Naive thymus-derived CD4-positive, alpha-beta T cell (primary cell): ENCODE measurements at regions of chr10 and their contacts with region 1.

Region 1: GRCh38 chr10:113960617-113961181 is 83.0 kb upstream of the ADRB1 start:
- DNase-seq: peak in 5 of 9 donors; percentile 4 to 34 (median 21)
- ATAC-seq: no peak
- H3K4me3 ChIP-seq: peak overlapping the region; percentile 27
- H3K4me3 Mint-ChIP-seq: peak overlapping the region; percentile 31 to 79 (median 67)
- H3K27ac ChIP-seq: no peak overlapping the region
- H3K27ac Mint-ChIP-seq: peak overlapping the region in 8 of 9 donors; percentile 30 to 92 (median 82)
- H3K4me1 ChIP-seq: peaks cover 37 to 47% of the 10 kb centered on the region in 2 donors
- H3K4me1 Mint-ChIP-seq: peaks cover 26 to 64% (median 49%) of the 10 kb centered on the region in 7 donors
- H3K27me3 ChIP-seq: no peaks in the 10 kb centered on the region
- H3K27me3 Mint-ChIP-seq: peaks cover 0 to 27% (median 6%) of the 10 kb centered on the region in 5 donors

Region 2: DNA sequence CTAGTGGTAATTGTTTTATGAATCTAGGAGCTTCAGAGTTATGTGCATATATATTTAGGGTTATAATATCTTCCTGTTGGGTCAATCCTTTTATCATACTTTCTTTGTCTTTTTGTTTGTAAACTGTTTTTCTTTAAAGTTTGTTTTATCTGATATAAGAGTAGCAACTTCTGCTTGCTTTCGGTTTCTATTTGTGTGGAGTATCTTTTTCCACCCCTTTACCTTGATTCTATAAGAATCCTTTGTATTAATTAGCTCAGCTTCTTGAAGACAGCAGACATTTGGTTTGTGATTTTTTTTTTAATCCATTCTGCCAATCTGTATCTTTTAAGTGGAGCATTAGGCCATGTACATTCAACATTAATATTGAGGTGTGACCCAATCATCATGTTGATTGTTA is 271.6 kb before region 1 on chr10:
- CTCF ChIA-PET with region 1: no interaction called
- POLR2A ChIA-PET with region 1: no interaction called
- intact Hi-C with region 1: no loop called
- DNase-seq: no peak
- ATAC-seq: no peak
- H3K4me3 ChIP-seq: no peak overlapping the region
- H3K4me3 Mint-ChIP-seq: peak overlapping the region in 3 of 10 donors; percentile 1 to 75 (median 34)
- H3K27ac ChIP-seq: no peak overlapping the region
- H3K27ac Mint-ChIP-seq: peak overlapping the region in 1 of 9 donors; percentile 85
- H3K4me1 ChIP-seq: peaks cover 0 to 7% of the 10 kb centered on the region in 2 donors
- H3K4me1 Mint-ChIP-seq: peaks cover 17 to 48% (median 27%) of the 10 kb centered on the region in 7 donors
- H3K27me3 ChIP-seq: no peaks in the 10 kb centered on the region
- H3K27me3 Mint-ChIP-seq: no peaks in the 10 kb centered on the region

Region 3: GRCh38 chr10:113907166-113907565 is 53.5 kb before region 1 on chr10:
- CTCF ChIA-PET with region 1: no interaction called
- POLR2A ChIA-PET with region 1: no interaction called
- intact Hi-C with region 1: loop called in 1 of 2 experiments (anchors 5 kb)
- DNase-seq: no peak
- ATAC-seq: no peak
- H3K4me3 ChIP-seq: no peak overlapping the region
- H3K4me3 Mint-ChIP-seq: no peak overlapping the region
- H3K27ac ChIP-seq: no peak overlapping the region
- H3K27ac Mint-ChIP-seq: no peak overlapping the region
- H3K4me1 ChIP-seq: no peaks in the 10 kb centered on the region
- H3K4me1 Mint-ChIP-seq: no peaks in the 10 kb centered on the region
- H3K27me3 ChIP-seq: no peaks in the 10 kb centered on the region
- H3K27me3 Mint-ChIP-seq: no peaks in the 10 kb centered on the region

Region 4: DNA sequence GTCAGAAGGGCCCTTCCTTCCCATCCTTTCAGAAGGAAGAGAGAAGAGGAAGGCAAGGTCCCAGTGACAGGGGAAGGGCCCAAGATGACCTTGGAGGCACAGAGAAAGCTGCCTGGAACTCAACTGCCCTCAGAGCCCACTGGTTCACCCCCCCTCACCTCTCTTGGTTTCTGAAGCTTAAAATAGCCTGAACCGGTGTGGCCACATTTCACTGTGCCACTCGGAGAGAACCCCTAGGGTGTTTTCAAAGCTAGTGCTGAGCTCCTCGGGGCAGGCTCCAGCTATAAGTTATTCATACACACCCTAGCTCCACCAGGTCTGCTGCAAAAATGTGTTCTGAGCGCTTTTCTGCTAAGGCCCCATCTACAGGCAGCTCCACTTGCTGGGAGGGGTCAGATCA is 22.1 kb after region 1 on chr10:
- CTCF ChIA-PET with region 1: no interaction called
- POLR2A ChIA-PET with region 1: no interaction called
- intact Hi-C with region 1: loop called in 1 of 2 experiments (anchors 2 kb)
- DNase-seq: no peak
- ATAC-seq: no peak
- H3K4me3 ChIP-seq: no peak overlapping the region
- H3K4me3 Mint-ChIP-seq: no peak overlapping the region
- H3K27ac ChIP-seq: no peak overlapping the region
- H3K27ac Mint-ChIP-seq: no peak overlapping the region
- H3K4me1 ChIP-seq: peaks cover 8 to 13% of the 10 kb centered on the region in 2 donors
- H3K4me1 Mint-ChIP-seq: peaks cover 12 to 29% (median 14%) of the 10 kb centered on the region in 7 donors
- H3K27me3 ChIP-seq: no peaks in the 10 kb centered on the region
- H3K27me3 Mint-ChIP-seq: peaks cover 0 to 51% (median 3%) of the 10 kb centered on the region in 5 donors

Region 5: GRCh38 chr10:114024876-114025610 is 64.3 kb after region 1 on chr10:
- CTCF ChIA-PET with region 1: interaction called, 3 read pairs
- POLR2A ChIA-PET with region 1: no interaction called
- intact Hi-C with region 1: loop called in 1 of 2 experiments (anchors 1 kb)
- DNase-seq: peak in 4 of 9 donors; percentile 5 to 49 (median 26)
- ATAC-seq: peak; percentile 87
- H3K4me3 ChIP-seq: no peak overlapping the region
- H3K4me3 Mint-ChIP-seq: peak overlapping the region in 9 of 10 donors; percentile 5 to 57 (median 51)
- H3K27ac ChIP-seq: no peak overlapping the region
- H3K27ac Mint-ChIP-seq: peak overlapping the region in 2 of 9 donors; percentile 7 to 27
- H3K4me1 ChIP-seq: peaks cover 7 to 13% of the 10 kb centered on the region in 2 donors
- H3K4me1 Mint-ChIP-seq: peaks cover 18 to 36% (median 31%) of the 10 kb centered on the region in 7 donors
- H3K27me3 ChIP-seq: peaks cover 0 to 6% of the 10 kb centered on the region in 2 donors
- H3K27me3 Mint-ChIP-seq: peaks cover 27 to 53% (median 31%) of the 10 kb centered on the region in 5 donors

Region 6: GRCh38 chr10:114043532-114044246 is 83.0 kb after region 1 on chr10 and contains the start of gene ADRB1:
- CTCF ChIA-PET with region 1: no interaction called
- POLR2A ChIA-PET with region 1: no interaction called
- intact Hi-C with region 1: loop called in 1 of 2 experiments (anchors 5 kb)
- DNase-seq: peak in 4 of 9 donors; percentile 2 to 41 (median 16)
- ATAC-seq: peak; percentile 64
- H3K4me3 ChIP-seq: peak within 1 kb of the TSS; percentile 30
- H3K4me3 Mint-ChIP-seq: peak within 1 kb of the TSS; percentile 68 to 84 (median 80)
- H3K27ac ChIP-seq: no peak within 1 kb of the TSS
- H3K27ac Mint-ChIP-seq: peak within 1 kb of the TSS in 2 of 9 donors; percentile 28 to 70
- H3K4me1 ChIP-seq: peaks cover 0 to 8% of the 10 kb centered on the region in 2 donors
- H3K4me1 Mint-ChIP-seq: peaks cover 14 to 27% (median 20%) of the 10 kb centered on the region in 7 donors
- H3K27me3 ChIP-seq: peaks cover 2 to 6% of the 10 kb centered on the region in 2 donors
- H3K27me3 Mint-ChIP-seq: peaks cover 52 to 87% (median 74%) of the 10 kb centered on the region in 5 donors
- total RNA-seq, gene ADRB1: 0.29 to 0.64 TPM in 2 of 5 experiments, not detected in the others

Region 7: GRCh38 chr10:114083040-114083439 is 122.3 kb after region 1 on chr10:
- CTCF ChIA-PET with region 1: no interaction called
- POLR2A ChIA-PET with region 1: no interaction called
- intact Hi-C with region 1: loop called in 1 of 2 experiments (anchors 1 kb)
- DNase-seq: peak in 2 of 9 donors; percentile 24 to 38
- ATAC-seq: peak; percentile 18
- H3K4me3 ChIP-seq: no peak overlapping the region
- H3K4me3 Mint-ChIP-seq: no peak overlapping the region
- H3K27ac ChIP-seq: no peak overlapping the region
- H3K27ac Mint-ChIP-seq: peak overlapping the region in 1 of 9 donors; percentile 48
- H3K4me1 ChIP-seq: no peaks in the 10 kb centered on the region
- H3K4me1 Mint-ChIP-seq: no peaks in the 10 kb centered on the region
- H3K27me3 ChIP-seq: no peaks in the 10 kb centered on the region
- H3K27me3 Mint-ChIP-seq: peaks cover 0 to 31% (median 4%) of the 10 kb centered on the region in 5 donors